Dendritic cell treated with granulocyte-macrophage colony-stimulating factor and Interleukin-4, amounts not matched to agents 40 ng/mL and 50 ng/mL, for 4 days (primary cell): ENCODE measurements at regions of chr2 and their contacts with region 1.

Region 1: GRCh38 chr2:162123806-162124758 is 28.0 kb downstream of the GCG start:
- H3K4me3 Mint-ChIP-seq: no peak overlapping the region
- H3K27ac Mint-ChIP-seq: peak overlapping the region; percentile 57
- H3K4me1 Mint-ChIP-seq: peaks cover 23% of the 10 kb centered on the region
- H3K27me3 Mint-ChIP-seq: no peaks in the 10 kb centered on the region

Region 2: GRCh38 chr2:161436411-161436810 is 687.7 kb before region 1 on chr2:
- intact Hi-C with region 1: loop called (anchors 10 kb)
- H3K4me3 Mint-ChIP-seq: no peak overlapping the region
- H3K27ac Mint-ChIP-seq: no peak overlapping the region
- H3K4me1 Mint-ChIP-seq: no peaks in the 10 kb centered on the region
- H3K27me3 Mint-ChIP-seq: peaks cover 27% of the 10 kb centered on the region

Region 3: DNA sequence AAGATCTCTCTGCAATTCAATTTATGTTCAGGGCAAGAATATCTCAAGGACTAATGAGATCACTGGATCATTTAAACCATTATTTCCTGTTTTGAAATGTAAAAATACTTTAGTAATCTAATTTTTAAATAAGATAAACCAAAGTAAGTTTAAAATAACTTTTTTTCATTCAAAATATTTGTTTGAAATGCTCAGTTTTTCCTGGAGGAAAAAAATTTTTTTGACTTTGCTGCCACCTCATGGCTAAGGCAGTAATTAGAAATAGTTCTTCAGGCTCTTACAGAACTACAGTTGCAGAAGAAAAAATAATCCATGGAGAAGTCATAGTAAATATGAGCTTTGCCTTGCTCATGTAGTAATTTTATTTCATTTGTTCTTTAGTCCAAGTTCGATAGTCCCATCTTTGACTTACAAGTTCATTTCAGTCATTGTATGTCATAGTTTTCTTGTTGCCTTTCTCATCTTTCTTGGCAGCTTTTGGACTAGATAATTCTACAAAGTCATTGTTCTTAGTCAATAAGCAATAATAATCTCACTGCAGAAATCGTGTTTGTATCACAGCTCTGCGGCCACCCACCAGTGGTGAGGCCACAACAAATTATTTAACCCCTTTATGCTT is 177.5 kb before region 1 on chr2:
- intact Hi-C with region 1: loop called (anchors 5 kb)
- H3K4me3 Mint-ChIP-seq: no peak overlapping the region
- H3K27ac Mint-ChIP-seq: no peak overlapping the region
- H3K4me1 Mint-ChIP-seq: no peaks in the 10 kb centered on the region
- H3K27me3 Mint-ChIP-seq: peaks cover 2% of the 10 kb centered on the region

Region 4: GRCh38 chr2:162007447-162008040 is 116.5 kb before region 1 on chr2:
- intact Hi-C with region 1: loop called (anchors 1 kb)
- H3K4me3 Mint-ChIP-seq: no peak overlapping the region
- H3K27ac Mint-ChIP-seq: no peak overlapping the region
- H3K4me1 Mint-ChIP-seq: peaks cover 23% of the 10 kb centered on the region
- H3K27me3 Mint-ChIP-seq: no peaks in the 10 kb centered on the region